ENCODE measurements at regions of chr18 and their contacts with region 1.

Region 1: DNA sequence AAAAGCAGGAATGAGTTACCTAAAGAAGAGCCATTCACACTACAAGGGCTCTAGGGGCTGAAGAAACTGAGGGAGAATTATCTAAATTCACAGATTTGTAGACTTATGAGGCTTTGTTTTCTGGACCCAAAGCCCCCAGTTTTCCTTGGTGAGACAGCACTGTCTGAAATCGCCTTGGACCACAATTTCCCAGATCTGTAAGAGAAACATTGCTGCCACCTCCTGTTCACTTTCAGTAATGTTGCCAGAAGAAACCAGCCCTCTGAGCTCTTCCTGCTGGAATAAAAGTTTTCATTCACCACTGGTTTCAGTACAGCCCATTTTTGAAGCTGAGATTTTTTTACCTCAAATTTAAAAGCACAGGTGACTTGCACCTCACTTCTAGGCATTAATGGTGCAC is 169.2 kb downstream of the CDH20 start:
- DNase-seq: peak; percentile 31
- H3K4me3 ChIP-seq: no peak overlapping the region
- H3K27ac ChIP-seq: no peak overlapping the region
- H3K4me1 ChIP-seq: no peaks in the 10 kb centered on the region
- H3K27me3 ChIP-seq: no peaks in the 10 kb centered on the region
- CTCF ChIP-seq: peak; percentile 61

Region 2: GRCh38 chr18:60146220-60146960 is 1356.1 kb before region 1 on chr18:
- intact Hi-C with region 1: no loop called
- DNase-seq: no peak
- H3K4me3 ChIP-seq: no peak overlapping the region
- H3K27ac ChIP-seq: no peak overlapping the region
- H3K4me1 ChIP-seq: no peaks in the 10 kb centered on the region
- H3K27me3 ChIP-seq: no peaks in the 10 kb centered on the region
- CTCF ChIP-seq: no peak

Region 3: GRCh38 chr18:60684843-60685513 is 817.5 kb before region 1 on chr18:
- intact Hi-C with region 1: loop called (anchors 10 kb)
- DNase-seq: no peak
- H3K4me3 ChIP-seq: no peak overlapping the region
- H3K27ac ChIP-seq: no peak overlapping the region
- H3K4me1 ChIP-seq: no peaks in the 10 kb centered on the region
- H3K27me3 ChIP-seq: no peaks in the 10 kb centered on the region
- CTCF ChIP-seq: peak; percentile 39

Region 4: DNA sequence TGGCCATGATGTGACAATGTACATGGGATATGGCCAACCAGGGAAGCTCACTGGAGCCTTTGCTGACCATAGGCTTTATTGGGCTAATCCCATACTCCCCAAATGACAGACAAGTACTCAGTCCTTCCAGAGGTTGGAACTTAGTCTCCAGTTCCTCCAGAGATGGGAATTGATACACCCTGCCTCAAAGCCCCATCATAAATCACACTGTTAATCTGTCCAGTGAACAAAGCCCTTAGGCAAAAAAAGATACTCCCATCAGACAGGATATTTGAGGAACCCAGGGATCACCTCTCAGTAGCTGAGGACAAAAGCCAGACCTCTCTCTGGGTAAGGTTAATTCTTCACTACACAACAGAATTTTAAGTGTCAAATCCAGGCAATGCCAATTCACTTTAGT is 416.7 kb before region 1 on chr18:
- intact Hi-C with region 1: loop called (anchors 5 kb)
- DNase-seq: no peak
- H3K4me3 ChIP-seq: no peak overlapping the region
- H3K27ac ChIP-seq: no peak overlapping the region
- H3K4me1 ChIP-seq: no peaks in the 10 kb centered on the region
- H3K27me3 ChIP-seq: no peaks in the 10 kb centered on the region
- CTCF ChIP-seq: no peak

Region 5: DNA sequence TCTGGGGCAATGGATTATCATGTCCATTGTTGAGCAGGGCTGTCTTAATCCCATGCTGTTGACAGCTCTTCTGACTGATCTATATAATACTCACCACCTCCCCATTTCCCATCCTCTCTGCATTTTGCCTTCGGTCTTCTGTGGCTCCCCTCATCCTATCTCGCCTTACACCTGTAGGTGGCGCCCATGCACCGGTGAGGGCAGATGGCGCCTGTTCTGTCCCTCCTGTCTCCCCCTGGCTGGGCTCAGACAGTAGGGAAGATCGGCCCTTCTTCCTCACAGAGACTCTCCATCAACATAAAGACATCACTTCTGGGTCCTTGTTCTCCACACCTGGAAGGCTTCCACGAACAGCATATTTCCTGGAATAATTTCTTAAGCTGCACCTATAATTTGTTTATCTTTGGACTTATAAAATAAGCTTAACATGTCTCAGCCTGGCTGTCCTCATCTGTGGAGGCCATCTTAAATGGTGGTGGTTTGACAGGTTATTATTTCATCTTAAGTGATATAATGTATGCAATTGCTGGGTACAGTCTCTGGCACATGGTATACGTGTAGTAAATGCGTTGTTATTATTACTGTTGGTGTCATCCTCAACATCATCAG is 180.1 kb before region 1 on chr18:
- intact Hi-C with region 1: loop called (anchors 2 kb)
- DNase-seq: peak; percentile 57
- H3K4me3 ChIP-seq: no peak overlapping the region
- H3K27ac ChIP-seq: no peak overlapping the region
- H3K4me1 ChIP-seq: no peaks in the 10 kb centered on the region
- H3K27me3 ChIP-seq: no peaks in the 10 kb centered on the region
- CTCF ChIP-seq: peak; percentile 69

Region 6: DNA sequence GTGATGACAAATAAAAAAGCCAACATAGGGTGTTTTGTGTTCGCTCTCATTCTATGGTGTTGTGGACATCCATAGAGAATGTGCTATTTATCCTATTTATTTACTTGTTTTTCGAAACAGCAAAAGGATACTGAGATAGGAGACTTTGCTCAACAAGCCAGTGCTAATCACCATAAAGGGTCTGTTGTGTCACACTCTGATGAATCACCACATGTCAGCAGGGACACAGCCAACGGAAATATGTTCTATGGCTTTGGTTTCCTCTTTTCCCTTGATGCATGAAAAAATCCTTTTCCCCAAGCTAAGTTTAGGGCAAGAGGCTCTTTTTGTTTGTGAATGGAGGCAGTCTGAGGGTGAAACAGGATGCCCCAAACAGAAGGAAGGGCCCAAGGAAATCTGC is 236.0 kb after region 1 on chr18:
- intact Hi-C with region 1: no loop called
- DNase-seq: no peak
- H3K4me3 ChIP-seq: no peak overlapping the region
- H3K27ac ChIP-seq: peak overlapping the region; percentile 24
- H3K4me1 ChIP-seq: peaks cover 9% of the 10 kb centered on the region
- H3K27me3 ChIP-seq: no peaks in the 10 kb centered on the region
- CTCF ChIP-seq: no peak

Region 7: DNA sequence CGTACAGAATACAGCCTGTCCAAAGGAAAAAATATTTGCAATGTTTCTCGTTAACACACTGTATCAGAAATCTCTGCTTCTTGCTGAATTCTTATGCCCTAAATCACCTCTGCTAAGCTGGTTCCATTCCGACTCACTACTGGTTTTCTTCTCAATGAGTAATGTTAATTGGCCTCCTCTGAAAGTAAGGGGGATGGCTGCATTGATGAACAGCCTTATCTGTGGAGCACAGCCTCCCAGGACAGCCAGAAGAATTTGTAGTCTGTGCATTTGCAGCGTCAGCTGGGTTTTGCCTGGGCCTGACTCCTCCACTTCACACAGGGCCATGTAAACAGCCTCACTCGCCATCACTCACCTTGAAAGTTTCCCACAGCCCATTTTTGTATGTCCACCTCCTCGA is 262.6 kb after region 1 on chr18:
- intact Hi-C with region 1: no loop called
- DNase-seq: no peak
- H3K4me3 ChIP-seq: no peak overlapping the region
- H3K27ac ChIP-seq: no peak overlapping the region
- H3K4me1 ChIP-seq: no peaks in the 10 kb centered on the region
- H3K27me3 ChIP-seq: no peaks in the 10 kb centered on the region
- CTCF ChIP-seq: no peak

Measured in colonic mucosa (tissue), 4 donors.